ENCODE measurements at regions of chr10 and their contacts with region 1.

Region 1: DNA sequence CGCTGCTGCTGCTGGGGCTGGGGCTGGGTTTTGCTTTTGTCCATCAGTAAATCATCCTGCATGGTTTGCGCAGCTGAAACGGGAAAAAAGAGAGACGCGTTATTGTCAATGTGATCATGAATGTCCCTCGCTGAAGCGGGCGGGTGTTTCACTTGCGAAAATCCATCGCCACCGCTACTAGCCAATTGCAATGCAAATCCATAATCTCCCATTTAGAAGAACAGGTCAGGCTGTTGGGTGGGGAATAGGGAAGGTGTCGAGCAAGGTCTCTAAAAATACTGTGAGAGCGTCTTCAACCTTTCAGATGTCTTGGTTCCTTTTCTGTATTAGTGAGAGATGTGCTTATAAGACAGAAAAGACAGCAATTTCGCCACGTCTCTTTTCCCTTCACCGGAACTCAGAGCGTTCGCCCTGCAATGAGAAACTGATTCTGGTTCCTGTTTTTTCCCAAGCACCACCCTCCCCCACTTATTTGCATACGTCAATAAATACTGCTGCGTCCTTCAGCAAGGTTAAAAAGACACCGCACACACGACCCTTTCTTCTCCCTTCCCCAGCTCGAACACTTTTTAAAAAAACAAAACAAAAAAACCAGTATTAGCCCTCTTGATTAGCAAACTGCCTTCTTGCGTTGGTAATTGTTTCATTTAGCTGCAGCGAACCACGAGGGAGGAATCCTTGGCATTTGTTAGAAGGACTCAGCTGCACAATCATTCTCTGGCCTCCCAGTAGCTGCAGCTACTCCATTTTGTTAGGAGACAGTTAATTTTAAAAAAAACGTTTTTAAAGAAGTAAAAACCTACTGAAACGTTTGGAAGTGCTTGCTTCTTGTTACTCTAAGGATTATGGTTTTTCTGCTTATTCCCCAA is 50.4 kb downstream of the CPEB3 start:
- DNase-seq: peak; percentile 51
- H3K4me3 Mint-ChIP-seq: peak overlapping the region; percentile 78
- H3K27ac Mint-ChIP-seq: peak overlapping the region; percentile 71
- H3K4me1 Mint-ChIP-seq: peaks cover 41% of the 10 kb centered on the region
- H3K27me3 Mint-ChIP-seq: no peaks in the 10 kb centered on the region
- CTCF ChIP-seq: no peak

Region 2: GRCh38 chr10:92064506-92064905 is 176.0 kb before region 1 on chr10:
- CTCF ChIA-PET with region 1: no interaction called
- intact Hi-C with region 1: no loop called
- DNase-seq: no peak
- H3K4me3 Mint-ChIP-seq: no peak overlapping the region
- H3K27ac Mint-ChIP-seq: no peak overlapping the region
- H3K4me1 Mint-ChIP-seq: no peaks in the 10 kb centered on the region
- H3K27me3 Mint-ChIP-seq: no peaks in the 10 kb centered on the region
- CTCF ChIP-seq: no peak

Region 3: GRCh38 chr10:92124616-92125143 is 115.8 kb before region 1 on chr10:
- CTCF ChIA-PET with region 1: interaction called, 7 read pairs
- intact Hi-C with region 1: loop called (anchors 5 kb)
- DNase-seq: peak; percentile 11
- H3K4me3 Mint-ChIP-seq: no peak overlapping the region
- H3K27ac Mint-ChIP-seq: peak overlapping the region; percentile 91
- H3K4me1 Mint-ChIP-seq: peaks cover 53% of the 10 kb centered on the region
- H3K27me3 Mint-ChIP-seq: no peaks in the 10 kb centered on the region
- CTCF ChIP-seq: no peak

Region 4: GRCh38 chr10:92290837-92291615 is 50.5 kb after region 1 on chr10 and contains the starts of genes CPEB3 and MARCHF5:
- CTCF ChIA-PET with region 1: interaction called, 3 read pairs
- intact Hi-C with region 1: loop called (anchors 2 kb)
- DNase-seq: peak; percentile 92
- H3K4me3 Mint-ChIP-seq: peak within 1 kb of the TSS; percentile 77
- H3K27ac Mint-ChIP-seq: peak within 1 kb of the TSS; percentile 42
- H3K4me1 Mint-ChIP-seq: no peaks in the 10 kb centered on the region
- H3K27me3 Mint-ChIP-seq: no peaks in the 10 kb centered on the region
- CTCF ChIP-seq: peak; percentile 72
- total RNA-seq, gene CPEB3: 2.8 and 3.6 TPM in 2 replicates
- total RNA-seq, gene MARCHF5: 27.1 and 28.1 TPM in 2 replicates

Measured in Calu3 (cell line).